GM18951 (cell line): ENCODE measurements at regions of chr4 and their contacts with region 1.

Region 1: DNA sequence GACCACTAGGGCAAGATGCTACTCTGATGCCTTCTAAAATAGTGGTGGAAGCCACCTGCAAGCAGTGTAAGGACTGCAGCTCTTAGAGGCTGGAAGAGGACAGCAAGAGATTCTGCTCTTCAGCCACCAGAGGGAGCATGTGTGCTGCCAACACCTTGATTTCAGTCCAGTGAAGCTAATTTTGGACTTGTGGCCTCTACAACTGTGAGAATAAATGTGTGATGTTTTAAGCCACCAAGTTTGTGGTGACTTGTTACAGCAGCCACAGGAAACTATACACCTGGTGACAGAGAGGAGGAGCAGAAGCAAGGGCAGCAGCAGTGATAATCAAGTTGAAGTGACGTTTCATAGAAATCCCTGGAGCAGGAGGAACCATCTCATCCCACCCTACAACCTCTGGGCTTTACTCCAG is 55.9 kb downstream of the FGFBP1 start:
- POLR2A ChIP-seq: no peak

Region 2: DNA sequence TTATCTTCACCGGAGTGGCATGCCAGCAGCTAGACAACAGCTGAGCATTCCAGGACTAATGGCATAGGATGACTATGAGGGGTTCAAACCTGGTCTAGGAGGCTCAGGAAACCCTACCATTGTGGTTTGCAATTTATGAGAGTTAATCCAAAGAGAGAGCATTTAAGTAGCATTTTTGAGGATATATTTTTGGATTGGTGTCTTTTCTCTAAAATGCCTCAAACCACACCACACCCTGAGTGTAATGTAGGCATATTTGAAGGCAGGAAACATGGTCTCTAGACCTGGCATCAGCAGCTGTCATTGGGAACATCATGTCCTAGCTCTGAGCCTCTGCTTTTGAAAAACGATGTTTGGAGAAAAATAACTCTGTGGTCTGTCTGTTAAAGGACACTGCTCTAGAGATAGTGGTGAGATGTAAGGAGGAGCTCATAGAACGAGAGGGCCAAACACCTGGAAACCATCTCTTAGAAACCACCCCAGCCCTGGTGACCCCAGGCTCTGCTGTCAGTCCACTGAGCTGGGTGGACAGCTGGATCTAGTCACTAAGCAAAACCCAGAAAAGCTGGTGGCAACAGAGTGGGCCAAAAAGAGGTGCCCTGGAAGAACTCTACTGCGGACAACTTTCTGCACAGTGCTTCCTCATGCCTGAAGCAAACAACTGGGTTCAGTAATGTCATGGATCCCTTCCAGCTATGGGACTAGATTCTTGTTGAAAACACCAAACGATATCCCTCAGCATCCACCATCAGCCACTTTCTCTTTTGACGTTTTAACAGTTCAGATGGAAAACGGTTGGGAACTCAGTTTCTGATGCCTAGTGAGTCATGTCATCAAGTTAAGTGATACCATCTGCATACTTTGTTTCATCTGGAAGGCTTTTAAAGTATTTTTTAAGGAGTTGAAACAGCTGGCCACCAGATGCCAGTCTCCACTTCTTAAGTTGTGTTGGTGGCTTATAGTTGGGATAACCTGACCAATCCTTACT is 555.1 kb before region 1 on chr4:
- in situ Hi-C with region 1: no loop called
- POLR2A ChIP-seq: no peak

Region 3: DNA sequence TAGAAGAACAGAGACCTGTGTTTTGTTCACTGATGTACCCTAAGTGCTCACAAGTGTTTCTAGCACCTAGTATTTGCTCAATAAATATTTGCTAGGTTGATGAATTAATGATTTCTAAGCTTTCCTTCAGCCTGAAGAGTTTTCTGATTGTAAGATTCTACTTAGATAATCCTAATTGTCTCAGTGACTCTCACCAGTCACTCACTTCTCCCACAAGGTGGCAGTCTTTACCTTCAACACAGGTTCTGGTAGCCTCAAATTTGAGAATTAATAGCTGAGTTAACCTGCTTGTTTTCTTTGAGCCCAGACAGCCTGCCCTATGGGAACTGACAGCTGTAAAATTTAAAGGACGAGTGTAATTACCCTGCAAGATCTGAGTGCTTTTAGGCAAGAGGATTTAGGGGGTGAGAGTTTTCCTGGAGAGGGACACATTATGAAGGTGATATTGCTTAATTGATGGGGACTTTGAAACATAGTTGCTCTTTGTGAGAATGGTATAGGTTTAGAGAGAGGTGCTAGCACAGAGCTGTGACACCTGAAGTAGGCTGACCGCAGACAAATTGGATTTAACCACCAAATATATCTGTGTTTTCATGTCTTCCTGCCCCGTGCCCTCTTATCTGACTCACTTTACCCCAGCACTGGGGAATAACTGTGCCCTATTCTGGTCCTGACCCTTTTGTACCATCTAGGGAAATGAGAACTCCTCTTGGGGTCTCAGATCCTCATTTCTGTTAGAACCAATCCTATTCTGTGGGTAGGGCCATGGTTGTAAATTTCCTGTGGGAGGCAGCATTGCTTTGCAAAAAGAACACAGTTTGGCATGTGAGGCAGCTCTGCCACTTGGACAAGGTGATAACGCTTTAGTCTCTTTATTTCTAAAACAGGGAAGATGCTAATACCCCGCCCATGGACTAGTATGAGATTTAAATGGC is 76.8 kb before region 1 on chr4:
- in situ Hi-C with region 1: loop called (anchors 10 kb)
- POLR2A ChIP-seq: no peak